ENCODE measurements at regions of chr18 and their contacts with region 1.

Region 1: DNA sequence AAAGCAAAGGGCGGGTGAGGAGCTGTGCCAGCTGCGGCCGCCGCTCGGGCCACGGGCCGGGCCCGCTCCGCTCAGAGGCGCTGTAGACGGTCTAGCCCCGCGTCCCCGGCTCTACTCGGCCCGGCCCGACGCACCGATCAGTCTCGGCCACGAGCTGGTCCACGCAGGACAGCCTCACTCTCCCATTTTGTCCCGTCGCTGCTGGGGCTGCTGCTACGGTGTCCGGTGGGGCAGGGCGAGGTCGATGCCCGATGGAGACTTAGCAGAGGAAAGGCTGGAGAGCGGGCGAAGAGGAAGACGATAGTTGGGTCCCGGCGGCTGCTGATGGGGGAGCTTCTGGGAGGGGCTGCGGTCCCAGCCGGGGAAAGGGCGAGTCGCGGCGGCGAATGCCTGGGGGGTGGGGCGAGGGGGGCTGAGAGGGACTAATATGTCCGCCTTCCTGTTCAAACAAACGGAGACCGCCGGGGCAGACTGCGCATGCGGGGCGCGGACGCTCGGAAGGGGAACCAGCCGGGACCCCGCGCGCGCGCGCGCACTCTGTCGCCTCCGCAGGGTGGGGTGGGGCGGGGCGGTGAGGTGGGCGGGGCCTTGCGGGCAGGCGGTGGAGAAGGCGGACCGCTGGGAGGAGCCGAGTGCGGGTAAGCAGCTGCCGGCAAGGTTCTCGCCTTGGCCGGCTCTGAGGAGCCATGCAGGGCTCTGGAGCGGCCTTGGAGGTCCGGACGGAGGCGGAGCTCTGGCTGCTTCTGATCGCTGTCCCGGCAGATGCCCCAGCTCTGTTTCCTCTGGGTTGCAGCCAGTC is at the start of gene ROCK1:
- DNase-seq: peak; percentile 95 to 98 (median 97)
- ATAC-seq: peak; percentile 93
- H3K4me3 ChIP-seq: peak within 1 kb of the TSS; percentile 94
- H3K4me3 Mint-ChIP-seq: peak within 1 kb of the TSS in 1 of 10 donors; percentile 98
- H3K27ac ChIP-seq: peak within 1 kb of the TSS; percentile 96
- H3K27ac Mint-ChIP-seq: peak within 1 kb of the TSS; percentile 87 to 97 (median 93)
- H3K4me1 ChIP-seq: peaks cover 31 to 34% of the 10 kb centered on the region in 2 donors
- H3K4me1 Mint-ChIP-seq: peaks cover 3 to 16% (median 7%) of the 10 kb centered on the region in 7 donors
- H3K27me3 ChIP-seq: no peaks in the 10 kb centered on the region
- H3K27me3 Mint-ChIP-seq: peaks cover 0 to 2% (median 0%) of the 10 kb centered on the region in 5 donors
- total RNA-seq, gene ROCK1: 66.2 to 97.5 (median 75.8) TPM

Region 2: DNA sequence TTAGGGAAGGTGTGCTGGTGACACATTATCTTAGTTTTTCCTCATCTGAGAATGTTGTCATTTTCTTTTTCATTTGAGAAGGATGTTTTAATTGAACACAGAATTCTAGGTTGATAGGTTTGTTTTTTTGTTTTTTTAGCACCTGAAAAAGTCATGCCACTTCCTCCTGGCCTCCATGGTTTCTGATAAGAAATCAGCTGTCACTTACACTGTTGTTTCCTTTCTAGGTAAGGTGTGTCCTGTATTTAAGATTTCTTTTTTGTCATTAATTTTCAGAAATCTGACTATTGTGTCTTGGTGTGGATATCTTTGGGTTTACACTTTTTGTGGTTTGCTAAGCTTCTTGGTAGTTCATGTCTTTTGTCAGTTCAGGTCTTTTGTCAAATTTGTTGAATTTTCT is 99.2 kb before region 1 on chr18:
- CTCF ChIA-PET with region 1: no interaction called
- POLR2A ChIA-PET with region 1: interaction called, 3 read pairs
- intact Hi-C with region 1: loop called in 1 of 2 experiments (anchors 5 kb)
- DNase-seq: peak in 1 of 9 donors; percentile 1
- ATAC-seq: no peak
- H3K4me3 ChIP-seq: no peak overlapping the region
- H3K4me3 Mint-ChIP-seq: peak overlapping the region in 1 of 10 donors; percentile 18
- H3K27ac ChIP-seq: no peak overlapping the region
- H3K27ac Mint-ChIP-seq: peak overlapping the region in 5 of 9 donors; percentile 39 to 61 (median 43)
- H3K4me1 ChIP-seq: no peaks in the 10 kb centered on the region
- H3K4me1 Mint-ChIP-seq: peaks cover 5 to 18% (median 9%) of the 10 kb centered on the region in 7 donors
- H3K27me3 ChIP-seq: no peaks in the 10 kb centered on the region
- H3K27me3 Mint-ChIP-seq: no peaks in the 10 kb centered on the region

Region 3: GRCh38 chr18:21099442-21099841 is 12.1 kb before region 1 on chr18:
- CTCF ChIA-PET with region 1: no interaction called
- POLR2A ChIA-PET with region 1: interaction called, 5 read pairs
- intact Hi-C with region 1: loop called in 1 of 2 experiments (anchors 1 kb)
- DNase-seq: no peak
- ATAC-seq: peak; percentile 32
- H3K4me3 ChIP-seq: no peak overlapping the region
- H3K4me3 Mint-ChIP-seq: peak overlapping the region in 9 of 10 donors; percentile 17 to 68 (median 54)
- H3K27ac ChIP-seq: no peak overlapping the region
- H3K27ac Mint-ChIP-seq: peak overlapping the region in 3 of 9 donors; percentile 6 to 19 (median 14)
- H3K4me1 ChIP-seq: peaks cover 16 to 38% of the 10 kb centered on the region in 2 donors
- H3K4me1 Mint-ChIP-seq: peaks cover 38 to 88% (median 77%) of the 10 kb centered on the region in 7 donors
- H3K27me3 ChIP-seq: no peaks in the 10 kb centered on the region
- H3K27me3 Mint-ChIP-seq: no peaks in the 10 kb centered on the region

Region 4: DNA sequence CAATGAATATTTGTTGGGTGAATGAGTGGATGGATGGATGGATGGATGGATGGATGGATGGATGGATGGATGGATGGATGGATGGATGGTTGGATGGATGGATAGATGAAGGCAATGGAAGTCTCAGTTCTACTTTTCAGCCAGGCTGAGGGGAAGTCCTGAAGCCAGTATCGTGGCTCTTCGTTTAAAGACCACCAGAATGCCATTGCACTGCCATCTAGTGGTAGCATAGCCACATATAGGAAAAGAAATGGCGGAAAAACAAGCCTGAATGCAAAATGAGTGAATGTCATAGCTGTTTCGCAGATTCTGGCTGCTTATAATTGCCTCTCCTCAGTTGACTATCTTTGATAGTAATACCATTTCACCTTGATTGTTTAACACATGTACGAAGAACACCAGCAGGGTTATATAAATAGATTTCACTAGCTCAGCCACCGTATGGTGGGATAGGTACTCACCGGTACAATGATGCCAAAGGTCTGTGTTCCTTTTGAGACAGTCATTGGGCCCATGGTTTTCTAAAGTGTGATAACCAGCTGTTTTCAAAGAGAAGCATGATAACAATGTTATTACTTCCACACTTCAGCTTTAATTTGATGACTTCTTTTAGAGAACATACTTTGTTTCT is 68.2 kb after region 1 on chr18:
- CTCF ChIA-PET with region 1: no interaction called
- POLR2A ChIA-PET with region 1: no interaction called
- intact Hi-C with region 1: loop called in 1 of 2 experiments (anchors 2 kb)
- DNase-seq: peak in 6 of 9 donors; percentile 4 to 49 (median 18)
- ATAC-seq: peak; percentile 82
- H3K4me3 ChIP-seq: no peak overlapping the region
- H3K4me3 Mint-ChIP-seq: no peak overlapping the region
- H3K27ac ChIP-seq: no peak overlapping the region
- H3K27ac Mint-ChIP-seq: no peak overlapping the region
- H3K4me1 ChIP-seq: no peaks in the 10 kb centered on the region
- H3K4me1 Mint-ChIP-seq: peaks cover 0 to 10% (median 7%) of the 10 kb centered on the region in 7 donors
- H3K27me3 ChIP-seq: no peaks in the 10 kb centered on the region
- H3K27me3 Mint-ChIP-seq: peaks cover 0 to 2% (median 0%) of the 10 kb centered on the region in 5 donors

Region 5: GRCh38 chr18:21300769-21301140 is 189.2 kb after region 1 on chr18:
- CTCF ChIA-PET with region 1: no interaction called
- POLR2A ChIA-PET with region 1: no interaction called
- intact Hi-C with region 1: no loop called
- DNase-seq: no peak
- ATAC-seq: no peak
- H3K4me3 ChIP-seq: no peak overlapping the region
- H3K4me3 Mint-ChIP-seq: no peak overlapping the region
- H3K27ac ChIP-seq: no peak overlapping the region
- H3K27ac Mint-ChIP-seq: no peak overlapping the region
- H3K4me1 ChIP-seq: no peaks in the 10 kb centered on the region
- H3K4me1 Mint-ChIP-seq: peaks cover 0 to 1% (median 0%) of the 10 kb centered on the region in 7 donors
- H3K27me3 ChIP-seq: no peaks in the 10 kb centered on the region
- H3K27me3 Mint-ChIP-seq: peaks cover 0 to 37% (median 17%) of the 10 kb centered on the region in 5 donors

Region 6: DNA sequence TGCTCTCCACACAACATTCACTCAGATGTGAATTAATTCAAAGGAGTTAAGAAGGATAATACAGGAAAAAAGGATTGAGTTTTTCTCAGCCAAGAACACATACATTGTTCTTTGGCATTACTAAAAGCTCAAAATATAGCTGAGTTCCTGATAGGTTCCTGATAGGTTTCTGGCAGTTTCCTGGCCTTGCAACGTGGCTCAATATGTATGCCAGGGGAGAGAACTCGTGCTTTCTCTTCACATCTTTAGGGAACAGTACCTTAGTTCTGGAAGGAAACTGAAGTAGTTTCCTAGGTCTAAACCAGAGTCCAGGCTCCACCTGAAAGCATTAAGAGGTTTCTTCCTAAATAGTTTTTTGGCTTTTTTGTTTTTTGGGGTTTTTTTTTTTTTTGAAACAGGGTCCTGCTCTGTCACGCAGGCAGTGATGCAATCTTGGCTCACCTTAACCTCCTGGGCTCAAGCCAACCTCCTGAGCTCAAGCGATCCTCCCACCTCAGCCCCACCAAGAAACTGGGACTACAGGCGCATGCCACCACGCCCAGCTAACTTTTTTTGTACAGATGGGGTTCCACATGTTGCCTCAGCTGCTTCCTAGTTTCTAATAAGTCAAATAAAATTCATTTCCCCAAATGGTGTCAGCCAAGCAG is 446.2 kb after region 1 on chr18:
- CTCF ChIA-PET with region 1: no interaction called
- POLR2A ChIA-PET with region 1: no interaction called
- intact Hi-C with region 1: no loop called
- DNase-seq: no peak
- ATAC-seq: no peak
- H3K4me3 ChIP-seq: no peak overlapping the region
- H3K4me3 Mint-ChIP-seq: no peak overlapping the region
- H3K27ac ChIP-seq: no peak overlapping the region
- H3K27ac Mint-ChIP-seq: no peak overlapping the region
- H3K4me1 ChIP-seq: no peaks in the 10 kb centered on the region
- H3K4me1 Mint-ChIP-seq: peaks cover 0 to 8% (median 0%) of the 10 kb centered on the region in 7 donors
- H3K27me3 ChIP-seq: no peaks in the 10 kb centered on the region
- H3K27me3 Mint-ChIP-seq: no peaks in the 10 kb centered on the region

Region 7: GRCh38 chr18:21704603-21705364 is 593.2 kb after region 1 on chr18 and contains the start of gene ABHD3:
- CTCF ChIA-PET with region 1: no interaction called
- POLR2A ChIA-PET with region 1: no interaction called
- intact Hi-C with region 1: loop called (anchors 1 to 2 kb)
- DNase-seq: peak; percentile 85 to 94 (median 91)
- ATAC-seq: peak; percentile 97
- H3K4me3 ChIP-seq: peak within 1 kb of the TSS; percentile 83
- H3K4me3 Mint-ChIP-seq: peak within 1 kb of the TSS; percentile 91 to 99 (median 97)
- H3K27ac ChIP-seq: peak within 1 kb of the TSS; percentile 93
- H3K27ac Mint-ChIP-seq: peak within 1 kb of the TSS; percentile 87 to 97 (median 94)
- H3K4me1 ChIP-seq: peaks cover 10 to 21% of the 10 kb centered on the region in 2 donors
- H3K4me1 Mint-ChIP-seq: peaks cover 12 to 56% (median 39%) of the 10 kb centered on the region in 7 donors
- H3K27me3 ChIP-seq: no peaks in the 10 kb centered on the region
- H3K27me3 Mint-ChIP-seq: no peaks in the 10 kb centered on the region
- total RNA-seq, gene ABHD3: 26.9 to 53.1 (median 43.6) TPM

Measured in naive thymus-derived CD4-positive, alpha-beta T cell (primary cell).